ENCODE measurements at regions of chr4 and their contacts with region 1.

Region 1: GRCh38 chr4:181528570-181529184 is 714.5 kb upstream of the TENM3 start:
- DNase-seq: peak; percentile 55
- H3K4me3 ChIP-seq: peak overlapping the region in 1 of 2 experiments; percentile 30; a peak in 1 of 4 replicates
- H3K27ac ChIP-seq: no peak overlapping the region
- H3K4me1 ChIP-seq: peaks cover 0 to 5% of the 10 kb centered on the region in 2 experiments; a peak in 2 of 4 replicates
- H3K27me3 ChIP-seq: no peaks in the 10 kb centered on the region; the same call in 1 of the 2 replicates
- CTCF ChIP-seq: peak; percentile 86
- EP300 ChIP-seq: no peak
- RAD21 ChIP-seq: peak; percentile 97

Region 2: GRCh38 chr4:180828440-180829018 is 700.1 kb before region 1 on chr4:
- CTCF ChIA-PET with region 1: interaction called, 10 read pairs
- POLR2A ChIA-PET with region 1: no interaction called
- DNase-seq: peak; percentile 51
- H3K4me3 ChIP-seq: no peak overlapping the region
- H3K27ac ChIP-seq: no peak overlapping the region
- H3K4me1 ChIP-seq: peaks cover 0 to 8% of the 10 kb centered on the region in 2 experiments; a peak in 1 of 4 replicates
- H3K27me3 ChIP-seq: no peaks in the 10 kb centered on the region
- CTCF ChIP-seq: peak; percentile 82
- EP300 ChIP-seq: no peak
- RAD21 ChIP-seq: peak; percentile 93

Region 3: DNA sequence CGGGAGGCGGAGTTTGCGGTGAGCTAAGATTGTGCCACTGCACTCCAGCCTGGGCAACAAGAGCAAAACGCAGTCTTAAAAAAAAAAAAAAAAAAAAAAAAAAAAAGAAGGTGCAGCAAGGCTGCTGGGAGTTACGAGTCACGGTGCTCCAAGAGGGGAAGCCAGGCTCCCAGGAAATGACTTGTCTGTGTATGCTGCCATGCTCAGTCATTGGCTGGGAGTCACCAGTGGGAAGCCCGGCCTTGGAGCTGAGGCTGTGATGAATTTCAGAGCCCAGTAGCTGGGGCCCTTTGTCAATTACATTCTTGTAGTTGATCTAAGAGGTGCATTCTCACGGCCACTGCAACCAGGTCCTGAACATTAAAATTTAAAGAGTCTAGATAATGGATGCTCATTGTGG is 390.6 kb before region 1 on chr4:
- CTCF ChIA-PET with region 1: interaction called, 96 read pairs
- POLR2A ChIA-PET with region 1: interaction called, 3 read pairs
- DNase-seq: no peak
- H3K4me3 ChIP-seq: no peak overlapping the region
- H3K27ac ChIP-seq: no peak overlapping the region
- H3K4me1 ChIP-seq: no peaks in the 10 kb centered on the region
- H3K27me3 ChIP-seq: no peaks in the 10 kb centered on the region
- CTCF ChIP-seq: no peak
- EP300 ChIP-seq: no peak
- RAD21 ChIP-seq: no peak

Region 4: GRCh38 chr4:181517491-181517890 is 11.2 kb before region 1 on chr4:
- CTCF ChIA-PET with region 1: interaction called, 13 read pairs
- POLR2A ChIA-PET with region 1: no interaction called
- DNase-seq: no peak
- H3K4me3 ChIP-seq: no peak overlapping the region
- H3K27ac ChIP-seq: no peak overlapping the region
- H3K4me1 ChIP-seq: peaks cover 0 to 7% of the 10 kb centered on the region in 2 experiments; a peak in 1 of 4 replicates
- H3K27me3 ChIP-seq: no peaks in the 10 kb centered on the region
- CTCF ChIP-seq: no peak
- EP300 ChIP-seq: no peak
- RAD21 ChIP-seq: no peak

Region 5: GRCh38 chr4:181541396-181541795 is 12.7 kb after region 1 on chr4:
- CTCF ChIA-PET with region 1: interaction called, 22 read pairs
- POLR2A ChIA-PET with region 1: no interaction called
- DNase-seq: no peak
- H3K4me3 ChIP-seq: no peak overlapping the region
- H3K27ac ChIP-seq: no peak overlapping the region
- H3K4me1 ChIP-seq: no peaks in the 10 kb centered on the region
- H3K27me3 ChIP-seq: no peaks in the 10 kb centered on the region
- CTCF ChIP-seq: no peak
- EP300 ChIP-seq: no peak
- RAD21 ChIP-seq: no peak

Region 6: GRCh38 chr4:181799561-181800069 is 270.9 kb after region 1 on chr4:
- CTCF ChIA-PET with region 1: no interaction called
- POLR2A ChIA-PET with region 1: no interaction called
- DNase-seq: no peak
- H3K4me3 ChIP-seq: no peak overlapping the region
- H3K27ac ChIP-seq: no peak overlapping the region
- H3K4me1 ChIP-seq: no peaks in the 10 kb centered on the region
- H3K27me3 ChIP-seq: no peaks in the 10 kb centered on the region
- CTCF ChIP-seq: no peak
- EP300 ChIP-seq: no peak
- RAD21 ChIP-seq: no peak